ENCODE measurements at regions of chr7 and their contacts with region 1.

Region 1: GRCh38 chr7:75738987-75739795 is 450 bp upstream of the HIP1 start:
- DNase-seq: peak; percentile 99 to 100 (median 100)
- H3K4me3 ChIP-seq: peak overlapping the region; percentile 70 to 100 (median 97)
- H3K27ac ChIP-seq: peak overlapping the region; percentile 42 to 94 (median 88)
- H3K27me3 ChIP-seq: no peaks in the 10 kb centered on the region
- CTCF ChIP-seq: peak in 31 of 56 donors; percentile 2 to 52 (median 29)

Region 2: GRCh38 chr7:75575488-75576121 is 163.6 kb before region 1 on chr7:
- intact Hi-C with region 1: loop called in 1 of 2 experiments (anchors 5 kb)
- DNase-seq: peak in 1 of 10 donors; percentile 28
- H3K4me3 ChIP-seq: no peak overlapping the region
- H3K27ac ChIP-seq: peak overlapping the region in 36 of 59 donors; percentile 3 to 72 (median 48)
- H3K27me3 ChIP-seq: no peaks in the 10 kb centered on the region
- CTCF ChIP-seq: no peak

Region 3: DNA sequence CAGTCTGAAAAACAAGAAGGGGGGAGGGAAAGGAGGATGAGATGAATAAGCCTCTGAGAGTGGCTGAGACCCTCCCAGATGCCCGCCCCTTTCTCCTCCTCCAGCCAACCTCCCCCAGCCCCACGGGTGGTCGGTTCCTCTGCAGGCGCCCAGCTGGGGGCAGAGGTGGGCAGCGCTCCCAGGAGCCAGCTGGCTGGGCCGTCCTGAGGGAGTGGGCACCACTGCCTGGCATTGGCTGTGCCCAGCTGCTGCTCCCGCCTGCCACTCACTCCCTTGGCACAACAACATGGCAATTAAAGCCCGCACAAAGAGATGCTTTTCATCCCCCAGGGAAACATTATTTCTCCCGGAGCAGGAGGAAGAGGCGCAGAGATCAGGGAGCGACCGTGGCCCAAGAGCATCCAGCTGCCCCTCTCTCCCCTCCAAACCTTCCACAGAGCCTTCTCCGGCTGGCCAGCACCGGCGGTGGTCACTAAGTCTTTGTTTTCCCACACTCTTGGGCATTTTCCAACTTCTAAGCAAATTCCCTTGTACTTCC is 139.9 kb before region 1 on chr7:
- intact Hi-C with region 1: loop called (anchors 1 kb)
- DNase-seq: peak; percentile 48 to 96 (median 94)
- H3K4me3 ChIP-seq: peak overlapping the region in 35 of 59 donors; percentile 3 to 53 (median 23)
- H3K27ac ChIP-seq: peak overlapping the region; percentile 72 to 98 (median 95)
- H3K27me3 ChIP-seq: no peaks in the 10 kb centered on the region
- CTCF ChIP-seq: peak in 27 of 56 donors; percentile 7 to 48 (median 23)

Region 4: GRCh38 chr7:75611548-75612178 is 127.5 kb before region 1 on chr7:
- intact Hi-C with region 1: loop called in 1 of 2 experiments (anchors 5 kb)
- DNase-seq: peak; percentile 86 to 97 (median 94)
- H3K4me3 ChIP-seq: peak overlapping the region in 53 of 59 donors; percentile 2 to 66 (median 38)
- H3K27ac ChIP-seq: peak overlapping the region; percentile 76 to 99 (median 93)
- H3K27me3 ChIP-seq: no peaks in the 10 kb centered on the region
- CTCF ChIP-seq: peak in 30 of 56 donors; percentile 5 to 55 (median 27)

Region 5: GRCh38 chr7:75642810-75643486 is 96.2 kb before region 1 on chr7:
- intact Hi-C with region 1: loop called in 1 of 2 experiments (anchors 5 kb)
- DNase-seq: peak in 2 of 10 donors; percentile 8 to 66
- H3K4me3 ChIP-seq: no peak overlapping the region
- H3K27ac ChIP-seq: peak overlapping the region in 11 of 59 donors; percentile 9 to 92 (median 41)
- H3K27me3 ChIP-seq: no peaks in the 10 kb centered on the region
- CTCF ChIP-seq: peak; percentile 19 to 82 (median 64)

Region 6: GRCh38 chr7:75662579-75663301 is 76.5 kb before region 1 on chr7:
- intact Hi-C with region 1: loop called in 1 of 2 experiments (anchors 5 kb)
- DNase-seq: no peak
- H3K4me3 ChIP-seq: no peak overlapping the region
- H3K27ac ChIP-seq: peak overlapping the region in 58 of 59 donors; percentile 14 to 97 (median 89)
- H3K27me3 ChIP-seq: no peaks in the 10 kb centered on the region
- CTCF ChIP-seq: no peak

Region 7: GRCh38 chr7:75688200-75689136 is 50.7 kb before region 1 on chr7:
- intact Hi-C with region 1: loop called in 1 of 2 experiments (anchors 2 kb)
- DNase-seq: peak; percentile 33 to 96 (median 92)
- H3K4me3 ChIP-seq: peak overlapping the region in 54 of 59 donors; percentile 9 to 63 (median 36)
- H3K27ac ChIP-seq: peak overlapping the region; percentile 60 to 99 (median 93)
- H3K27me3 ChIP-seq: no peaks in the 10 kb centered on the region
- CTCF ChIP-seq: peak in 12 of 56 donors; percentile 7 to 33 (median 14)